ENCODE measurements at regions of chr10 and their contacts with region 1.

Region 1: DNA sequence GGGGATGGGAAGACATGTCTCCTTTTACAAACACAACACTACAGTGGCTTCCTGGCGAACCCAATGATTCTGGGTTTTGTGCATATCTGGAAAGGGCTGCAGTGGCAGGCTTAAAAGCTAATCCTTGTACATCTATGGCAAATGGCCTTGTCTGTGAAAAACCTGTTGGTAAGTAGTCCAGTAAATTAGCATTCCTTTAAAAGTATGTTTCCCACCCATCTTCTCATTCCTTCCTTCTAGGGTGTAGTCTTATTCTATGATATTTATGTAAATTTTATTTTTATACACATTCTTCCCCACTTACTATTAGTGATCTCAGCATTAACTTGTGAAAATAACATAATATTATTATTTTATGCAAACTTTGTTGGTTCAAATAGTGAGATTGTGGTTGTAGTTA is 206.9 kb downstream of the ATRNL1 start:
- DNase-seq: no peak
- H3K4me3 ChIP-seq: no peak overlapping the region
- H3K27ac ChIP-seq: no peak overlapping the region
- H3K4me1 ChIP-seq: no peaks in the 10 kb centered on the region
- H3K27me3 ChIP-seq: no peaks in the 10 kb centered on the region
- CTCF ChIP-seq: no peak
- POLR2A ChIP-seq: no peak

Region 2: DNA sequence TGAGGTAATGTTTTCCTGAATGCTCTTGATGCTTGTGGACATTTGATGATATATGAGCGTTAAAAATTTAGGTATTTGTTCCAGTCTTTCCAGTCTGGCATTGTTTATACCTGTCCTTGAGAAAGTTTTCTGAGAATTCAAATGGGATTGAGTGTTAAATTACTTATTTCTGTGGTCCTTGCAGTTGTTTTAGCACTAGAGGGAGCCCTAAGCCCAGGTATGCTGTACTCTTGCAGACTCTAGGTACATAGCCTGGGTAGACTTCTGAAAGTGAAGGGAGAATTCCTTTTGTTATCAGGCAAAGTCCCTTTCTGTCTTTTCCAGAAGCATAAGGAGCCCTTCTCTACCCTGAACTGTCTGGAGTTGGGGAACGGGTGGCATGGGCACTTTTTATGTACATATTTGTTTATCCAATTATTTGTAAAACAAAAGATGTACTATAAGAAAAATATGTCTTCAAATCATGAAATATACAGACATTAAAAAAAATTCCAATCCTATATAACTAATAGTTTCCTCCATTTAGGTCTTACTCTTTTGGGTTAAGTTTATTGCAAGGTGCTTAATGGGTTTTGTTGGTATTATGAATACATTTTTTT is 55.2 kb after region 1 on chr10:
- intact Hi-C with region 1: loop called (anchors 2 kb)
- DNase-seq: no peak
- H3K4me3 ChIP-seq: no peak overlapping the region
- H3K27ac ChIP-seq: no peak overlapping the region
- H3K4me1 ChIP-seq: no peaks in the 10 kb centered on the region
- H3K27me3 ChIP-seq: no peaks in the 10 kb centered on the region
- CTCF ChIP-seq: peak in 1 of 3 experiments; percentile 41
- POLR2A ChIP-seq: no peak

Region 3: DNA sequence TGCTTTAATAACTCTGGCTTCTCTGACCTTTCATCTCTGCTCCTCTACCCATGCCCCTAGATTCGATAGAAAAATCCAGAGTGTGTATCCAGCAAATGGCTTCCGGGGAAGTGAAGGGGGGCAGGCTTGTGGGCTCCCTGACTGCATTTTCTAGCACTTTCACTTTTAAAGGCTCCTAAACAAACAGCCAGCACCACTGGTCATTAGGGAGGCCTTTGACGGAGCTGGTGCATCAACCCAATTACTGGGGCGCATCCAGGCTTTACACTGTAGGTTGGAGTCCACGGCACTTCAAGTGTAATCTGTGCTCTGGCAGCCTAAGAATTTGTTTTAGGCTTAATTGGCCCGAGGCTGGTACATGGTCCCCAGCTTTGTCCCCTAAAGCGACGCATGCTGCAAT is 681.0 kb after region 1 on chr10:
- intact Hi-C with region 1: no loop called
- DNase-seq: no peak
- H3K4me3 ChIP-seq: no peak overlapping the region
- H3K27ac ChIP-seq: no peak overlapping the region
- H3K4me1 ChIP-seq: no peaks in the 10 kb centered on the region
- H3K27me3 ChIP-seq: no peaks in the 10 kb centered on the region
- CTCF ChIP-seq: no peak
- POLR2A ChIP-seq: no peak

Measured in vagina (tissue), 2 donors.